Calu3 (cell line): ENCODE measurements at regions of chr1 and their contacts with region 1.

Region 1: DNA sequence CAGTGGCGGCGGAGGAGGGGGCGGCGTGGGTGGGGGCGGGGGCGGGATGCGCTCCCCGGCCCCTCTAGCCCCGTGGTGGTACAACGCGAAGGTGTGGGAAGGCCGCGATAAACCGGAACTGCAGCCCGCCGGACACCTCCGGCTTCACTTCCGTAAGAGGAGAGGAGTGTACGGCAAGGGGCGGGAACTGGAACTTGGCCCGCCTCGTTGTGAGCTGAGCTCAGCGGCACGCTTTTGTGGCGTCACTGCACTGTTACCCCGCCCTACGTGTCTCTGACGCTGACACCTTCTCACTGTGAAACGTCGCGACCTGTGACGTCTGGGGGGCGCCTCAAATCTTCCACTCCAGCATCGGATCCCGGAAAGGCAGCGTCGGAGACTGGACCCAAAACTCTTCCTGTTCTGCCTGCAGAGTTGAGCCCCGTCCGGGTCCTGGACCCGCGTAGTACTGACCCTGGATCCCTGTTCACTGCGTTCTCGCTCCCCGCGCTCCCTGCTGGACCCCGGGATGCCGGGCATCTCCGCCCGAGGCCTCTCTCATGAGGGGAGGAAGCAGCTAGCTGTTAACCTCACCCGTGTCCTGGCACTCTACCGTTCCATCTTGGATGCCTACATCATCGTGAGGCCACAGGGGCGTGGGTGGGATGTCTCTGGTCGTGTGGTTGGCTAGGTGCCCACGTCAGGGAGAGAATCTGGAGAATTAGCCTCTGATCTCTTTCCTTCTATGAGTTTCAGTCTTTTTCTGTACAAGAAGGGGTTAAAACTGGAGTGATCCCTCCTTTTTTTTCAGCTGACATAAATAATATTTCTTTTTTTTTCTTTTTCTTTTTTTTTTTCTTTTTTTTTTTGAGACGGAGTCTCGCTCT is at the start of gene ISG20L2:
- DNase-seq: peak; percentile 97
- H3K4me3 Mint-ChIP-seq: no peak within 1 kb of the TSS
- H3K27ac Mint-ChIP-seq: no peak within 1 kb of the TSS
- H3K4me1 Mint-ChIP-seq: peaks cover 21% of the 10 kb centered on the region
- H3K27me3 Mint-ChIP-seq: no peaks in the 10 kb centered on the region
- CTCF ChIP-seq: no peak
- total RNA-seq, gene ISG20L2: 60.9 and 61.6 TPM in 2 replicates

Region 2: GRCh38 chr1:156618853-156619581 is 109.8 kb before region 1 on chr1 and contains the start of gene HAPLN2:
- CTCF ChIA-PET with region 1: interaction called, 16 read pairs
- intact Hi-C with region 1: loop called (anchors 2 kb)
- DNase-seq: peak; percentile 61
- H3K4me3 Mint-ChIP-seq: no peak within 1 kb of the TSS
- H3K27ac Mint-ChIP-seq: no peak within 1 kb of the TSS
- H3K4me1 Mint-ChIP-seq: peaks cover 11% of the 10 kb centered on the region
- H3K27me3 Mint-ChIP-seq: peaks cover 73% of the 10 kb centered on the region
- CTCF ChIP-seq: peak; percentile 60
- total RNA-seq, gene HAPLN2: 0.27 TPM in 1 of 2 replicates, not detected in the other

Region 3: DNA sequence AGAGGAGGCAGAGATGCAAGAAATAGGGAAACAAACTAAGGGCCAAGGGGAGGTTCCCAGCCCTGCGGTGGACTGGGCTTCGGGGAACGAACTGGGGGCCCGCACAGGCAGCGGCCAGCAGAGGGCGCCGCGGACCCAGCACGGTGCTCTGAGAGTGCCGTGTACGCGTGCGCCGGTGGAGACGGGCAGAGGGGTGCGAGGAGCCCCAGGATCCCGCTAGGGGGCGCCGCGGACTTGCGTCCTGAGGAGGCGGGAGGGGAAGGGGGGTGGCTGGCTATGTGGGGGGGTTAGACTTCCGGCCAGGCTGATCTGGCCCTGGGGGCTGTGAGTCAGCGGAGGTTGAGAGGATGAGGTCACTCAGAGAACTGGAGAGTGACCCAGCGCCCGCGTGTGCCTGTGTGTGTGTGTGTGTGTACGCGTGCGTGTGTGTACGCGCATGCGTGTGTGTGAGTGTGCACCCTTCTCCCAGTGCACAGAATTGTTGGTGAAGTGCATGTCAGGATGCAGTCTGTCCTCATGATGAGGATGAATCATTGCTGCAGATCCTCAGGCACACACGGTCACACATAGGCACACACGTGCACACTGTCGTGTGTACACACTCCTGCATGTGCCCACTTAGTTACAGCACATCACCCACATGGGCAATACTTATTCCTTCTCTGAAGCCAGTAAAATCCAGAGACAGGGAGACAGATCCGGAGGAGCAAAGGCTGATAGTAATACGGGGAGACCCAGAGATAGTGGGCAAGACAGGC is 68.7 kb before region 1 on chr1:
- CTCF ChIA-PET with region 1: interaction called, 13 read pairs
- intact Hi-C with region 1: no loop called
- DNase-seq: peak; percentile 99
- H3K4me3 Mint-ChIP-seq: peak overlapping the region; percentile 87
- H3K27ac Mint-ChIP-seq: peak overlapping the region; percentile 88
- H3K4me1 Mint-ChIP-seq: peaks cover 77% of the 10 kb centered on the region
- H3K27me3 Mint-ChIP-seq: no peaks in the 10 kb centered on the region
- CTCF ChIP-seq: peak; percentile 98

Region 4: GRCh38 chr1:156712626-156713025 is 16.2 kb before region 1 on chr1:
- CTCF ChIA-PET with region 1: interaction called, 18 read pairs
- intact Hi-C with region 1: no loop called
- DNase-seq: no peak
- H3K4me3 Mint-ChIP-seq: no peak overlapping the region
- H3K27ac Mint-ChIP-seq: no peak overlapping the region
- H3K4me1 Mint-ChIP-seq: peaks cover 25% of the 10 kb centered on the region
- H3K27me3 Mint-ChIP-seq: no peaks in the 10 kb centered on the region
- CTCF ChIP-seq: no peak

Region 5: DNA sequence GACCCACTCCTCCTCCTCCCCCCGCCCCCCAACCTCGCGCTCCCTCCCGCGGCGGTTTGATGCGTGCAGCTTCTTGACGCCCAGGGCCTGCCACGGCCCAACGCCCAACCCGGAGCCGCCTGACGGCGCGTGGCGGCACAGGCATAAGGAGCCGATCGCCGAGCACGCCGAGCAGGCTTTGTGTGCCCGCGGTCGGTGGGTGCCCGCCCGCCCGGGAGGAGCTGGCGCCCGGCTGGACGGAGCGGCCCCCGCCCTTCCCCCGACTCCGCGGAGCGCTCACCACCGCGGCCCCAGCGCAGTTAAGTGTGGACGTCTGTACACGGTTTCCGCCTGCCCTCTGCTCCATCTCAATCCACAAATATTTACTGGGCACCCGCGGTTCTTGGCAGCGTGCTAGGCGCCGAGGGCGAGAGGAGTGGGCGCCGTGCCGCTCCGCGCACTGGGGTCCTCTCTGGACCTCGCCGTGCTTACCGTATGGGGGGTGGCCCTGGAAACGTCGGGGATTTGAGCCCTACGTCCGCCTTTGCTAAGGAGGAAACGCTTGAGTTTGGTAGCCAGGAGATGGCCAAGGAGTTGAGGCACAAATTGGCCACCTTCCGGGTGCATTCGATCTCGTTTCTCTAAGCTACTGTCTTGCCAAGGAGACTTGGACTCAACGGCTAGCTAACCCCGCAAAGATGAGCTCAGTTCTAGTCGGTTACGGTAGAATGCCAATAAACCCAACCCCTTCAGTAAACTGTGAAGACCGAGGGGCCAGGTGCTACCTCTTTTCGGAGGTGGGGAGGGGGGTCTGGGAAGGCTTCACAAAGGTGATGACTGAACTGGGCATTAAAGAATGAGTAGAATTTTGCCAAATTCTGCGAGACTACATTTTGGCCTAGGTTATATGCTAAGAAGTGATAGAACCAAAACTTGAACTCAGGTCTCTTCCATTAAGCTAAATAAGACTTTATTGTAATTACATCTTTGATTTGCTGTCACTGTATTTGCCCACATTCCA is 23.2 kb after region 1 on chr1:
- CTCF ChIA-PET with region 1: interaction called, 17 read pairs
- intact Hi-C with region 1: loop called (anchors 2 kb)
- DNase-seq: peak; percentile 98
- H3K4me3 Mint-ChIP-seq: peak overlapping the region; percentile 67
- H3K27ac Mint-ChIP-seq: peak overlapping the region; percentile 93
- H3K4me1 Mint-ChIP-seq: peaks cover 29% of the 10 kb centered on the region
- H3K27me3 Mint-ChIP-seq: no peaks in the 10 kb centered on the region
- CTCF ChIP-seq: no peak

Region 6: DNA sequence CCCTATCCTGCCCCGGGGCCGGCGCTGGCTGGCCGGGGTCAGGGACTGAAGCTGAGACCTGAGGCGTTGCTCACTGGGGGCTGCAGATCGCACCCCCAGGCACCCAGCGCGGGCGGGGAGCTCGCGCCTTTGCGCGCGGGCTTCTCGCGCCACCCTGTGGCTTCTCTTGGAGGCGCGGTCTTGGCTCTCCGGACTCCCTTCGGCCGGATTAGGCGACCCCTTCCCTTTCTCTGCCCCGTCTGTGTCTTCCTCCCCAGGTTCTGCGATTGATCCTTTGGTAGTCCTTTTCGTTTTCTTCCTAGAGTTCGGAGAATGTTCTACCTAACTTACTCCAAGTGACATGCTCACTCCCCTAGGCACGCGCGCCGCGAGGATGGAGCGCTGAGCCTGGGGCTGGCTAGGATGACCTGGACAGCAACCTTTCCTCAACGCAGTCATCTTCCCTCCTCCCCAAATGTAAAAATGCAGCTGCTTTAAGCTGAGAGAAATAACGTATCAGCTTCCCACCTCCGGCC is 131.3 kb after region 1 on chr1:
- CTCF ChIA-PET with region 1: interaction called, 49 read pairs
- intact Hi-C with region 1: loop called (anchors 2 kb)
- DNase-seq: peak; percentile 63
- H3K4me3 Mint-ChIP-seq: peak overlapping the region; percentile 58
- H3K27ac Mint-ChIP-seq: no peak overlapping the region
- H3K4me1 Mint-ChIP-seq: peaks cover 28% of the 10 kb centered on the region
- H3K27me3 Mint-ChIP-seq: peaks cover 96% of the 10 kb centered on the region
- CTCF ChIP-seq: peak; percentile 94